Right ventricle myocardium superior (tissue), 1 donor: ENCODE measurements at regions of chr2 and their contacts with region 1.

Region 1: GRCh38 chr2:25521665-25522387 is 151.6 kb downstream of the DTNB start:
- DNase-seq: no peak
- ATAC-seq: peak; percentile 81

Region 2: GRCh38 chr2:25342372-25343186 is 179.2 kb before region 1 on chr2:
- intact Hi-C with region 1: loop called (anchors 2 kb)
- DNase-seq: peak; percentile 88
- ATAC-seq: peak; percentile 87

Region 3: GRCh38 chr2:25376750-25377621 is 144.8 kb before region 1 on chr2:
- intact Hi-C with region 1: loop called (anchors 10 kb)
- DNase-seq: peak; percentile 91
- ATAC-seq: peak; percentile 99

Region 4: DNA sequence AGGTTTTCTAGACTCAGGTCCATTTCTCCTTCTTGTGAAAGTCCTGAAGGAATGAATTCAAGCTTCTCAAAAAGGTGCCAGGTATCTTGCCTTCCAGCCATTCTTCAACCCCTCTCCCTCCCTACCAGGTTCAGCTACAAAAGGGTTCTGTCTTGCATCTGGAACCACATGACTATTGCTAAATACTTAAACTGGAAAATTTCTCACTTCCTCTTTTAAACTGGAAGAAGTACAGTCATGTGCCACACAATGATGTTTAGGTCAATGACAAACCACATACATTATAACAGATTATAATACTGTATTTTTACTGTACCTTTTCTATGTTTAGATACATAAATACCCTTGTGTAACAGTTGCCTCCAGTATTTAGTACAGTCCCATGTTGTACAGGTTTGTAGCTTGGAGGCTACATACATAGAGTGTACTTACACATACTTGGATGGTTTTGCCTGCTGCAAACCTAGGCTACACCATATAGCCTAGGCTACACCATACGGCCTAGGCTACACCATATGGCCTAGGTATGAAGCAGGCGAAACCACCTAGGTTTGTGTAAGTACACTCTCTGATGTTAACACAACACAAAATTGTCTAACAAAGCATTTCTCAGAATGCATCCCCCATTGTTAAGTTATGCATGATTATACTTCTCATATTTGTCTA is 38.1 kb before region 1 on chr2:
- intact Hi-C with region 1: no loop called
- DNase-seq: no peak
- ATAC-seq: no peak

Region 5: GRCh38 chr2:25505630-25506029 is 16.2 kb before region 1 on chr2:
- intact Hi-C with region 1: no loop called
- DNase-seq: no peak
- ATAC-seq: no peak

Region 6: GRCh38 chr2:25539136-25539535 is 17.3 kb after region 1 on chr2:
- intact Hi-C with region 1: no loop called
- DNase-seq: no peak
- ATAC-seq: no peak

Region 7: GRCh38 chr2:25690058-25690457 is 168.2 kb after region 1 on chr2:
- intact Hi-C with region 1: no loop called
- DNase-seq: no peak
- ATAC-seq: no peak